GM12878 (cell line): ENCODE measurements at regions of chr1 and their contacts with region 1.

Region 1: DNA sequence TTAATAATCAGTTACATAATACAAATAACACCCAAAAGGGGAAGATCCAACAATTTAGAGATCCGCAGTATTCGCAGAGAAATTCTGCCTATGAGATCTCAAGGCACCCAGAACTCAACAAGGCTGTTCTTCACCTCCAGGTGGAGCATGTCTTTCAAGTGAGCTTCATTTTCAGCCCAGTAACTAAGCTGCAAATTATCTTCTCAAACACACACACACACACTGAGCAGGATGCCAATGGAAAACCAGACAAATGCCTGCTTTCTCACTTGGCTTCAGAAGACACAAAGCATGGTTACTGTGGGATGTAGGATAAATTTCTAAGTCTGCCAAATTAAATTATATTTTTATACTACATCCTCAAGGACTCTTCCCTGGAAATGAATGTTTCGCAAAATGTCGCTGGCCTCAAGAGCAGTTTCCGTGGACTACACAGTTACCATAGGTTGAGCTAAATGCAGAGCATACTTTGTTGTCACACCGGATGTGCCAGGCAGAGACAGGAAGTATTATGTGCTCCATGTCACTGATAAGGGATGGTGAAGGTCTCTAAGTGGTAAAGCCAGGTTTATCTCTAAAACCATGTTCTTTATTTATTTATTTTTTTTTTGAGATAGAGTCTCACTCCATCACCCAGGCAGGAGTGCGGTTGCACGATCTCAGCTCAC is 30.3 kb downstream of the UBR4 start:
- DNase-seq: no peak
- ATAC-seq: peak; percentile 47; the same call in 2 of the 3 replicates
- H3K4me3 ChIP-seq: no peak overlapping the region
- H3K27ac ChIP-seq: no peak overlapping the region
- H3K4me1 ChIP-seq: no peaks in the 10 kb centered on the region
- H3K27me3 ChIP-seq: no peaks in the 10 kb centered on the region
- CTCF ChIP-seq: peak; percentile 15 to 33 (median 32); a peak in 1 of 6 replicates
- EP300 ChIP-seq: no peak
- POLR2A ChIP-seq: no peak
- RAD21 ChIP-seq: no peak

Region 2: DNA sequence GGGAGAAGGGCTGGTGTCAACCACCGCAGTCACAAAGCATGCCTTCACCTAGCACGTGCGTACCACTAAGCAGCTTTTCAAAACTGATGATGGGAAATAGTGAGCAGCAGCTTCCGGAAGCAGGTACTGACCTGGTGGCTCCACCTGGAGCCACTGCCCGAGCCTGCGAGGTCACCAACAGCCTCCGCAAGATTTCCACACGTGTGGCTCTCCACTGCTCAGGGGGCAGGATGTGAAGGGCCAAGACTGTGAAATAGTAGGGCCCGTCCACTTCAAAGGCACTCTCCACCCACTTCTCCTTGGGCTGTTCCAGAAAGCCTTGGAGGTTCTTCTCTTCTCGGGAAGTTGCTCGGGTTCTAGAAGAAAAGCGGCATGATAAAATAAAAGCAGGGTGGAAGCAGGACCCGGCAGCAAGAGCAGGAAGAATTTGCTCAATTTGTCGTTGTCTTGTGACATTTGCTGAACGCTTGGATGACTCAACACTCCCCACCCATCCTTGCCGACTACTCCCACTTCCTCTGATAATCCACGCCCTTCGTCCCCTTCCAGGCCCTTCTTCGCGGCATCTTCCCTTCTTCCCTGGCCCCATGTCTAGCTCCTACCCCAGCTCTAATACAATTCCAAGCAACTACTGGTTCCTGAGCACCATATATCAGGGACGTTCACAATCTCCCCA is 98.4 kb before region 1 on chr1:
- CTCF ChIA-PET with region 1: no interaction called
- POLR2A ChIA-PET with region 1: no interaction called
- RAD21 ChIA-PET with region 1: no interaction called
- SMC1A ChIA-PET with region 1: no interaction called
- in situ Hi-C with region 1: no loop called
- intact Hi-C with region 1: no loop called
- DNase-seq: no peak
- ATAC-seq: no peak
- H3K4me3 ChIP-seq: no peak overlapping the region
- H3K27ac ChIP-seq: no peak overlapping the region
- H3K4me1 ChIP-seq: no peaks in the 10 kb centered on the region
- H3K27me3 ChIP-seq: no peaks in the 10 kb centered on the region
- CTCF ChIP-seq: no peak
- EP300 ChIP-seq: no peak
- POLR2A ChIP-seq: no peak
- RAD21 ChIP-seq: no peak

Region 3: GRCh38 chr1:19165501-19165900 is 14.2 kb before region 1 on chr1:
- CTCF ChIA-PET with region 1: interaction called, 11 read pairs
- POLR2A ChIA-PET with region 1: no interaction called
- RAD21 ChIA-PET with region 1: interaction called, 3 read pairs
- SMC1A ChIA-PET with region 1: interaction called, 10 read pairs
- in situ Hi-C with region 1: no loop called
- intact Hi-C with region 1: no loop called
- DNase-seq: no peak
- ATAC-seq: no peak
- H3K4me3 ChIP-seq: no peak overlapping the region
- H3K27ac ChIP-seq: peak overlapping the region; percentile 35; the same call in 1 of the 2 replicates
- H3K4me1 ChIP-seq: peaks cover 34% of the 10 kb centered on the region
- H3K27me3 ChIP-seq: no peaks in the 10 kb centered on the region
- CTCF ChIP-seq: no peak
- EP300 ChIP-seq: no peak
- POLR2A ChIP-seq: no peak
- RAD21 ChIP-seq: no peak

Region 4: DNA sequence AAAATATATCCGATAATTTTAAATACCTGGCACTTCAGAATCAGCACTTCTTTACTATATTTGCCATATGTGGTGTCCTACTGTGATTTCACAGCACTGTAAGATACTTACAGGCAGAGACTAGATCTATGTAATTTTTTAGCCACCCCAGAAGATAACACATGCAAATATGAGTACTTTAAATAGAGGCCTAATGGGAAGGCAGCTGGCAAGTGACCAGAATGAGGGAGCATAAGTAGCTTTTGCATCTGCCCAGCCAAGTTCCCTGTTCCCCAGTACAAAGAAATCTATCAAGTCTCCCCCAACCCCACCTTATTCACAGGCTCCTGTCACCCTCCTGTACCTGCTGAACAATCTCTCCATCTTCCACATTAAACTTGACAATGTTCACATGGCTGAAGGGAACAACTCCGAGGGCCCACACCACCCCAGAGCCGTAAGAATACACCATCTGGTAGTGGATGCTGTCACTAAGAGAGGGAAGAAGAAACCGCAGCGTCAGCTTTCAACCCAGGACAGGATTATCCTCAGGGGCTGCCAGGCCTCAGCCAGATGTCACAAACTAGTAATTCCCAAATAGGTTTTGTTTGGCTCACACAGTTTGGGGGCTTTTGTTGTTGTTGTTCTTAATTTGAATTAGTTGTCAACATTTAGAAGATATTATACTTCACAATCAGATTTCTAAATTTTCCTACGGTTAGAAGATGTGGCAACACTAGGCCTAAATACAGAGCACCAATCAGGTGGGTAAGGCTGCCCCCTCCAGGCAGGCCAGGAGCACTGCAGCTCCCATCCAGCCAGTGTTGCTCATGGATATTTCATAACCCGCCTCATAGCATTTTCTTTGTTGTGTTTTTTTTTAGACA is 61.2 kb after region 1 on chr1:
- CTCF ChIA-PET with region 1: interaction called, 16 read pairs
- POLR2A ChIA-PET with region 1: no interaction called
- RAD21 ChIA-PET with region 1: interaction called, 8 read pairs
- SMC1A ChIA-PET with region 1: interaction called, 8 read pairs
- in situ Hi-C with region 1: no loop called
- intact Hi-C with region 1: loop called (anchors 1 kb)
- DNase-seq: no peak
- ATAC-seq: peak; percentile 97
- H3K4me3 ChIP-seq: no peak overlapping the region
- H3K27ac ChIP-seq: no peak overlapping the region
- H3K4me1 ChIP-seq: no peaks in the 10 kb centered on the region
- H3K27me3 ChIP-seq: no peaks in the 10 kb centered on the region
- CTCF ChIP-seq: peak; percentile 89 to 96 (median 94)
- EP300 ChIP-seq: no peak
- POLR2A ChIP-seq: no peak
- RAD21 ChIP-seq: peak; percentile 73

Region 5: GRCh38 chr1:20753589-20753988 is 1573.9 kb after region 1 on chr1:
- CTCF ChIA-PET with region 1: no interaction called
- POLR2A ChIA-PET with region 1: no interaction called
- RAD21 ChIA-PET with region 1: no interaction called
- SMC1A ChIA-PET with region 1: no interaction called
- in situ Hi-C with region 1: loop called (anchors 25 kb)
- intact Hi-C with region 1: no loop called
- DNase-seq: no peak
- ATAC-seq: no peak
- H3K4me3 ChIP-seq: no peak overlapping the region
- H3K27ac ChIP-seq: no peak overlapping the region
- H3K4me1 ChIP-seq: no peaks in the 10 kb centered on the region
- H3K27me3 ChIP-seq: no peaks in the 10 kb centered on the region
- CTCF ChIP-seq: no peak
- EP300 ChIP-seq: no peak
- POLR2A ChIP-seq: no peak
- RAD21 ChIP-seq: no peak